Caco-2 (cell line): ENCODE measurements at regions of chr16 and their contacts with region 1.

Region 1: DNA sequence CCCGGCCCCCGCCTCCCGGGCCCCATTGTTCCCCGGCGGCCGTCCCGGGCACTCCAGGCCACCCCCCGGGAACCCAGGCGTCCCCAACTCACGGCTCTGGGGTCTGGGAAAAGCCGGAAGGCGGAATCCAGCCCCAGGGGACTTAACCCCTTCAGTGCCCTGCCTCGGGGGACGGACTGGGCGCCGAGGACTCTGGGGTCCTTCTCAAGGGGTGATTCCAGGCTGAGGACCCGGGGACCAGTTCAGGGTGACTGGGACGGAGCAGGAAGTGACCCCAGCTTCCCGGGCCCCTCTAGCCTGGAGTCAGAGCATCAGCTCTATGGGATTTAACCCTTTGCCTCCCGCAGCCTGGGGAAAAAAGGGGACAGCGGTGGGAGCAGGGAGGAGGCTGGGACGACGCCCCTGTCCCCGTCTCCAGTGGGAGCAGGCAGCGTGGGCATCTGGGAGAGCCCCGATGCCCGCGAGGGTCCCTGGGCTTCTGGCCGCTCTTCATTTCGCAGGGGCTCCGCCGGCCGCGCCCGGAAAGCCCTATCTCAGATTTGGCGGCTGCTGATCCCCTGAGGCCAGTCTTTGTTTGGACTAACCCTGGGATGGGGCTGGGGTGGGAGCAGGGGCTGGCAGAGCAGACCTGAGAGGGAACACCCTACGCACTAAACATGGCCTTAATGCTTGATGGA is at the start of gene ZNF629:
- DNase-seq: peak; percentile 79 to 82
- H3K4me3 ChIP-seq: peak within 1 kb of the TSS; percentile 72
- H3K4me3 Mint-ChIP-seq: peak within 1 kb of the TSS; percentile 93
- H3K27ac Mint-ChIP-seq: peak within 1 kb of the TSS; percentile 91
- H3K4me1 ChIP-seq: peaks cover 14% of the 10 kb centered on the region; the same call in 1 of the 2 replicates
- H3K4me1 Mint-ChIP-seq: no peaks in the 10 kb centered on the region
- H3K27me3 ChIP-seq: no peaks in the 10 kb centered on the region
- H3K27me3 Mint-ChIP-seq: no peaks in the 10 kb centered on the region
- CTCF ChIP-seq: no peak
- total RNA-seq, gene ZNF629: 18.9 and 20.6 TPM in 2 replicates

Region 2: DNA sequence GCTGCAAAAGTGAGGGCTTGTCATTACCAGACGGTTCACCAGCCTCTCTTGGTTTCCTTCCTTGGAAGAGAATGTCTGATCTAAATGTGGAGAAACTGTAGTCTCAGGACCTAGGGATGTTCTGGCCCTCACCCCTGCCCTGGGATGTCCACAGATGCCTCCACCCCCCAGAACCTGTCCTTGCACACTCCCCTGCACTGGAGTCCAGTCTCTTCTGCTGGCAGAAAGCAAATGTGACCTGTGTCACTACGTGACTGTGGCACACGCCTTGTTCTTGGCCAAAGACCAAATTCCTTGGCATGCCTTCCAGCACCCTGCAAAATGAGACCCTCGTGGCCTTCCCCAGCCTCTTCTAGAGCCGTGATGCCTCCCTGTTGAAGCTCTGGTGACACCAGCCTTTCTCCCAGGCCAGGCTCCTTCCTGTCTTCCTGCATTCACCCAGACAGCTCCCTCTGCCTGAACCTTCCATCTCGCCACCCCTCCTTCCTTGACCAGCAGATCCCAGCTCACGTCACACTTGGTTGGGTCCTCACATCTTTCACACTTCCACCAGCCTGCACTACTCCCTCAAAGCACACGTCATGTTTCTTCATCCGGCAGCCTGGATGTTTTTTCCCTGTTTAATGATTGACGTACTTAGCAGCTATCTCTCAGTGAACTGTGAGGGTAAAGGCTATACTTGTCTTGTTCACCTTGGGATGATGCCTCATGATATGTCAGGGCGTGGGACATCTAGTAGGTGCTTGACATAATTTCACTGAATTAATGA is 265.0 kb before region 1 on chr16:
- CTCF ChIA-PET with region 1: no interaction called
- POLR2A ChIA-PET with region 1: no interaction called
- intact Hi-C with region 1: no loop called
- DNase-seq: peak; percentile 44 to 58
- H3K4me3 ChIP-seq: no peak overlapping the region
- H3K4me3 Mint-ChIP-seq: peak overlapping the region; percentile 0
- H3K27ac Mint-ChIP-seq: peak overlapping the region; percentile 5
- H3K4me1 ChIP-seq: peaks cover 15% of the 10 kb centered on the region
- H3K4me1 Mint-ChIP-seq: peaks cover 8% of the 10 kb centered on the region
- H3K27me3 ChIP-seq: no peaks in the 10 kb centered on the region
- H3K27me3 Mint-ChIP-seq: no peaks in the 10 kb centered on the region
- CTCF ChIP-seq: no peak

Region 3: GRCh38 chr16:30805370-30806169 is 18.5 kb after region 1 on chr16:
- CTCF ChIA-PET with region 1: interaction called, 13 read pairs
- POLR2A ChIA-PET with region 1: interaction called, 16 read pairs
- intact Hi-C with region 1: loop called (anchors 1 kb)
- DNase-seq: peak; percentile 85 to 88
- H3K4me3 ChIP-seq: peak overlapping the region; percentile 73
- H3K4me3 Mint-ChIP-seq: peak overlapping the region; percentile 84
- H3K27ac Mint-ChIP-seq: peak overlapping the region; percentile 88
- H3K4me1 ChIP-seq: peaks cover 11% of the 10 kb centered on the region; the same call in 1 of the 2 replicates
- H3K4me1 Mint-ChIP-seq: no peaks in the 10 kb centered on the region
- H3K27me3 ChIP-seq: no peaks in the 10 kb centered on the region
- H3K27me3 Mint-ChIP-seq: no peaks in the 10 kb centered on the region
- CTCF ChIP-seq: no peak

Region 4: GRCh38 chr16:30838876-30839471 is 51.9 kb after region 1 on chr16:
- CTCF ChIA-PET with region 1: interaction called, 3 read pairs
- POLR2A ChIA-PET with region 1: no interaction called
- intact Hi-C with region 1: loop called (anchors 2 kb)
- DNase-seq: peak in 1 of 2 experiments; percentile 23
- H3K4me3 ChIP-seq: no peak overlapping the region
- H3K4me3 Mint-ChIP-seq: peak overlapping the region; percentile 47
- H3K27ac Mint-ChIP-seq: peak overlapping the region; percentile 71
- H3K4me1 ChIP-seq: peaks cover 33% of the 10 kb centered on the region
- H3K4me1 Mint-ChIP-seq: peaks cover 6% of the 10 kb centered on the region
- H3K27me3 ChIP-seq: no peaks in the 10 kb centered on the region
- H3K27me3 Mint-ChIP-seq: no peaks in the 10 kb centered on the region
- CTCF ChIP-seq: peak; percentile 20 to 25

Region 5: GRCh38 chr16:30850246-30850645 is 63.2 kb after region 1 on chr16:
- CTCF ChIA-PET with region 1: no interaction called
- POLR2A ChIA-PET with region 1: no interaction called
- intact Hi-C with region 1: no loop called
- DNase-seq: no peak
- H3K4me3 ChIP-seq: no peak overlapping the region
- H3K4me3 Mint-ChIP-seq: no peak overlapping the region
- H3K27ac Mint-ChIP-seq: no peak overlapping the region
- H3K4me1 ChIP-seq: peaks cover 11% of the 10 kb centered on the region; the same call in 1 of the 2 replicates
- H3K4me1 Mint-ChIP-seq: peaks cover 4% of the 10 kb centered on the region
- H3K27me3 ChIP-seq: no peaks in the 10 kb centered on the region
- H3K27me3 Mint-ChIP-seq: no peaks in the 10 kb centered on the region
- CTCF ChIP-seq: no peak

Region 6: GRCh38 chr16:30874821-30875717 is 88.0 kb after region 1 on chr16:
- CTCF ChIA-PET with region 1: no interaction called
- POLR2A ChIA-PET with region 1: interaction called, 7 read pairs
- intact Hi-C with region 1: loop called (anchors 1 kb)
- DNase-seq: peak; percentile 91 to 92
- H3K4me3 ChIP-seq: peak overlapping the region; percentile 98
- H3K4me3 Mint-ChIP-seq: peak overlapping the region; percentile 89
- H3K27ac Mint-ChIP-seq: peak overlapping the region; percentile 86
- H3K4me1 ChIP-seq: peaks cover 9% of the 10 kb centered on the region
- H3K4me1 Mint-ChIP-seq: peaks cover 12% of the 10 kb centered on the region
- H3K27me3 ChIP-seq: no peaks in the 10 kb centered on the region
- H3K27me3 Mint-ChIP-seq: no peaks in the 10 kb centered on the region
- CTCF ChIP-seq: no peak

Region 7: GRCh38 chr16:30888856-30889499 is 101.9 kb after region 1 on chr16:
- CTCF ChIA-PET with region 1: no interaction called
- POLR2A ChIA-PET with region 1: no interaction called
- intact Hi-C with region 1: no loop called
- DNase-seq: no peak
- H3K4me3 ChIP-seq: no peak overlapping the region
- H3K4me3 Mint-ChIP-seq: no peak overlapping the region
- H3K27ac Mint-ChIP-seq: no peak overlapping the region
- H3K4me1 ChIP-seq: 0 out of 2 replicates have a peak, but pooled peaks cover 6% of the 10 kb centered on the region
- H3K4me1 Mint-ChIP-seq: peaks cover 7% of the 10 kb centered on the region
- H3K27me3 ChIP-seq: no peaks in the 10 kb centered on the region
- H3K27me3 Mint-ChIP-seq: no peaks in the 10 kb centered on the region
- CTCF ChIP-seq: no peak